ENCODE measurements at regions of chr16 and their contacts with region 1.

Region 1: GRCh38 chr16:30609926-30610839 is at the start of gene ZNF689:
- DNase-seq: peak; percentile 96
- ATAC-seq: peak; percentile 88
- H3K4me3 Mint-ChIP-seq: peak within 1 kb of the TSS; percentile 80
- H3K27ac Mint-ChIP-seq: peak within 1 kb of the TSS; percentile 96
- H3K4me1 Mint-ChIP-seq: peaks cover 19% of the 10 kb centered on the region
- H3K27me3 Mint-ChIP-seq: no peaks in the 10 kb centered on the region
- total RNA-seq, gene ZNF689: 9.0 to 10.7 TPM

Region 2: GRCh38 chr16:30122604-30123160 is 487.5 kb before region 1 on chr16:
- CTCF ChIA-PET with region 1: no interaction called
- POLR2A ChIA-PET with region 1: no interaction called
- intact Hi-C with region 1: loop called in 1 of 2 experiments (anchors 10 kb)
- DNase-seq: peak; percentile 35
- ATAC-seq: peak; percentile 37
- H3K4me3 Mint-ChIP-seq: peak overlapping the region; percentile 87
- H3K27ac Mint-ChIP-seq: peak overlapping the region; percentile 89
- H3K4me1 Mint-ChIP-seq: peaks cover 17% of the 10 kb centered on the region
- H3K27me3 Mint-ChIP-seq: no peaks in the 10 kb centered on the region

Region 3: DNA sequence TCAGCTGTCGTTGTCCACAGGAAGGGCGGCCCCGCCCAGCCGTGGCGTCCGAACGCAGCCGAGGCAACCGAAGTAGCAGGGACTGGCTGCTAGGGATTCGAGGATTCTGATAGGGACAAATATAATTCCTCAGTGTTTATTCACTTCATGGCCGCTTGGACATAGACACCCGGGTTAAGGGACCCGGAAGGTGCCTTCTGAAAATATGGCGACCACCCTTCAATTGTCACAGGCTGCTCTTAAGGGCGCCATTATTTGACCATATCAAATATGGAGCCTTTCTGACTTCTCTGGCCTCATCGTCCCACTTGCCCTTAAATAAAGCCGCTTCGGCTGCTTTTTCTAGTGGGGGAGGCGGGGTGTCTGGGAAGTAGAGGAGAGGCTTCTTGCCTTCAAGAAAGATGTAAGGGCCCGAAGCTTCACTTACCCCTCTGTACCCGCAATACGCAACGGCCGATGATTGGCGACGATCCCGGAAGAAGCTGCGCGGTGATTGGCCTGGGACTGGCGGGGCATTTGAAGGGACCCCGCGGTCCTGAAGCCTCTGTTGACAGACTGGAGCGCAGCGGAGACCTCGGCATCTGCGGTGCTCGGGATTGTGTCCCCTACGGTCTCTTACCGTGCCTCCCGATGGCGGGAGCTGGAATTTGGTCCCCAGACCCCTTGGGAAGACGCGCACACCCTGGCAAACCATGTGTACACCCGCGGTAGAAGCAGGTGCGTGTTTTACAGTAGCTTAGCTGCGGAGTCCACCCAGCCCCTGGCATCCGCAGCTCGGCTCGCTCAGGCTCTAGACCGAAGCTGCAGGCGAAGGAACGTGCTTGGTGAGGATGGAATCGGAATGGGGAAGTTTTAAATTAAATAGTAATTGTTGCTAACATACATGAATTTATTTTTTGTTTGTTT is 38.2 kb before region 1 on chr16 and contains the start of gene ZNF688:
- CTCF ChIA-PET with region 1: interaction called, 9 read pairs
- POLR2A ChIA-PET with region 1: interaction called, 6 read pairs
- intact Hi-C with region 1: loop called in 1 of 2 experiments (anchors 1 kb)
- DNase-seq: peak; percentile 95
- ATAC-seq: peak; percentile 79
- H3K4me3 Mint-ChIP-seq: peak within 1 kb of the TSS; percentile 87
- H3K27ac Mint-ChIP-seq: peak within 1 kb of the TSS; percentile 93
- H3K4me1 Mint-ChIP-seq: peaks cover 57% of the 10 kb centered on the region
- H3K27me3 Mint-ChIP-seq: no peaks in the 10 kb centered on the region
- total RNA-seq, gene ZNF688: 7.1 to 9.1 TPM

Region 4: DNA sequence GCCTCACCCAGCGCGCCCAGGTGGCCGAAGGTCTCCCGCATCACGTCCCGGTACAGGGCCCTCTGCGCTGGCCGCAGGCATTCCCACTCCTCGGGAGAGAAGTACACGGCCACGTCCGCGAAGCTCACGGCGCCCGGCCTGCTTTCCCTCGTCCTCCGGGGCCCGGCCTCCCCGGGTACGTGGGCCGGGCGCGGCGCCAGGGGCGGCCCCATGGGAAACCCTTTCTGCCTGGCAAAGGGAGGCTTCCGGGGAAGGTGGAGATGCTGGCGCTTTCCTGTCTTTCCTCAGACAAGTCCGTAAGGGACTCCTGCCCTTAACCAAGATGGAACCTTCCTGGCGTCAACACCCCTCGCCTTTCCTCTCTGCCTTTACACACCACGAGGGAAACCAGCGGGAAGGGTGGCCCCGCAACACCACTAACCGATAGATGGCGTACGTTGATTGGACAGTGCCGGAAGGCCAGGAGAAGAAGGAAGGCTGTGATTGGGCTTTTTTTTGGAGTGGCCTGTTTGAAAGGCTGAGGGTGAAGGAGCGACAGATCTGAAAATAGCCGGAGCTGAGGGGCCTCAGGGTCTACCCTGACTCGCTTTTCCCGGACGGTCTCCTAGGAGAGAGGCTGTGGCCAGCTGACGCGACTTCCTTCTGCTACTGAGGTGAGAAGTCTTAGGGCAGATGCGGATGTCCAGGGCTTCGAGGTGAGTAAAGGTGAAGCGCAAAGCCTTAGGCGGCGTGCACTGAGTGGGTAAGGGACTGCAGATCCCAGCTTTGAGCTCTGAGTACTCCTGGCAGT is 24.6 kb before region 1 on chr16 and contains the start of gene ZNF785:
- CTCF ChIA-PET with region 1: interaction called, 5 read pairs
- POLR2A ChIA-PET with region 1: interaction called, 4 read pairs
- intact Hi-C with region 1: loop called in 1 of 2 experiments (anchors 1 kb)
- DNase-seq: peak; percentile 96
- ATAC-seq: peak; percentile 99
- H3K4me3 Mint-ChIP-seq: peak within 1 kb of the TSS; percentile 87
- H3K27ac Mint-ChIP-seq: peak within 1 kb of the TSS; percentile 92
- H3K4me1 Mint-ChIP-seq: peaks cover 37% of the 10 kb centered on the region
- H3K27me3 Mint-ChIP-seq: no peaks in the 10 kb centered on the region
- total RNA-seq, gene ZNF785: 9.2 to 10.8 TPM

Region 5: DNA sequence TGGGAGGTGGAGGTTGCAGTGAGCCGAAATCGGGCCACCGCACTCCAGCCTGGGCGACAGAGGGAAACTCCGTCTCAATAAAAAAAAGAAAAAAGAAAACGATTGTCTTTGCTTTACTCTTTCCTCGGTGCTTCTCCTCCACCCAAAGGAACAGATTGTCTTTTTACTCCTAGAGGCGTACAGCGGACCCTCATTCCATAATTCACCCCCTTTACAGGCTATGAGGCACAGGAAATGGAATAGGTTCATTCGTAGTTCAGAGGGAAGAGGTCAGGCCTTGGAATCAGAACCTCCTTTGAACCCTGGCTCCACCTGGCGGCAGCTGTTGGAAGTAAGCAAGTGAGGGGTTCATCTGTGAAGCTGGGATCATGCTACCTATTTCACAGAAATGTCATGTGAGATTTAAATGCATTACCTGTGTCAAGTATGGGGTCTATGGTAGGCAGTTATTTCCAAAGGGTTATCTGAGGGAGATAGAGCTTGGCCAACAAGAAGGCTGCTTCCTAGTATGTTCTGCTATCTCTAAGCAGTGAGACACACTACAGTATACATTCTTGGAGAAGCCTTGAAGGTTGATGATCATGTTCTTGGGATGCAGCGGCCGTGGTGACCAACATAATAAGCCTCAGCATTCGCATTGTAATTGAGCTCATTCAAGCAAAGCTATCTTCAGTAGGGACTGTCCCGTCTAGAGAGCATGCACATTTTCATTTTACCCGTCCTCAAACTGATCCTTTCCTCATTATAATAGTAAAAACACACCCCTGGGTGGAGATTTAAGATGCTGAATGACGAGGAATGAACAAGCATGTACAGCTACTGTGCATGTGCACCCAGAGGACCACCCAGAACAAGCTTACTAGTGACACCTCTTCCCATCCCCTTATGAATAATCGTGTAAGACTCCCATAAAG is 18.7 kb after region 1 on chr16:
- CTCF ChIA-PET with region 1: interaction called, 30 read pairs
- POLR2A ChIA-PET with region 1: interaction called, 3 read pairs
- intact Hi-C with region 1: loop called in 1 of 2 experiments (anchors 1 kb)
- DNase-seq: peak; percentile 95
- ATAC-seq: peak; percentile 93
- H3K4me3 Mint-ChIP-seq: peak overlapping the region; percentile 58
- H3K27ac Mint-ChIP-seq: peak overlapping the region; percentile 82
- H3K4me1 Mint-ChIP-seq: peaks cover 14% of the 10 kb centered on the region
- H3K27me3 Mint-ChIP-seq: no peaks in the 10 kb centered on the region

Region 6: GRCh38 chr16:30650369-30651123 is 40.4 kb after region 1 on chr16 and contains the start of gene PRR14:
- CTCF ChIA-PET with region 1: interaction called, 5 read pairs
- POLR2A ChIA-PET with region 1: interaction called, 3 read pairs
- intact Hi-C with region 1: loop called in 1 of 2 experiments (anchors 1 kb)
- DNase-seq: peak; percentile 100
- ATAC-seq: peak; percentile 82
- H3K4me3 Mint-ChIP-seq: peak within 1 kb of the TSS; percentile 95
- H3K27ac Mint-ChIP-seq: peak within 1 kb of the TSS; percentile 97
- H3K4me1 Mint-ChIP-seq: peaks cover 21% of the 10 kb centered on the region
- H3K27me3 Mint-ChIP-seq: no peaks in the 10 kb centered on the region
- total RNA-seq, gene PRR14: 76.8 to 77.8 TPM

Measured in activated CD4-positive, alpha-beta T cell treated with anti-CD3 and anti-CD28 coated beads for 36 hours (primary cell).